Activated naive CD4-positive, alpha-beta T cell treated with anti-CD3 and anti-CD28 coated beads, Interleukin-2, amount 10 ng/mL, durations not matched to agents 7 days and 5 days (primary cell): ENCODE measurements at regions of chr16 and their contacts with region 1.

Region 1: GRCh38 chr16:86517652-86518258 is 7.4 kb downstream of the FOXF1 start:
- DNase-seq: peak; percentile 49
- H3K4me3 Mint-ChIP-seq: no peak overlapping the region
- H3K27ac Mint-ChIP-seq: no peak overlapping the region
- H3K4me1 Mint-ChIP-seq: peaks cover 2% of the 10 kb centered on the region
- H3K27me3 Mint-ChIP-seq: peaks cover 85% of the 10 kb centered on the region

Region 2: DNA sequence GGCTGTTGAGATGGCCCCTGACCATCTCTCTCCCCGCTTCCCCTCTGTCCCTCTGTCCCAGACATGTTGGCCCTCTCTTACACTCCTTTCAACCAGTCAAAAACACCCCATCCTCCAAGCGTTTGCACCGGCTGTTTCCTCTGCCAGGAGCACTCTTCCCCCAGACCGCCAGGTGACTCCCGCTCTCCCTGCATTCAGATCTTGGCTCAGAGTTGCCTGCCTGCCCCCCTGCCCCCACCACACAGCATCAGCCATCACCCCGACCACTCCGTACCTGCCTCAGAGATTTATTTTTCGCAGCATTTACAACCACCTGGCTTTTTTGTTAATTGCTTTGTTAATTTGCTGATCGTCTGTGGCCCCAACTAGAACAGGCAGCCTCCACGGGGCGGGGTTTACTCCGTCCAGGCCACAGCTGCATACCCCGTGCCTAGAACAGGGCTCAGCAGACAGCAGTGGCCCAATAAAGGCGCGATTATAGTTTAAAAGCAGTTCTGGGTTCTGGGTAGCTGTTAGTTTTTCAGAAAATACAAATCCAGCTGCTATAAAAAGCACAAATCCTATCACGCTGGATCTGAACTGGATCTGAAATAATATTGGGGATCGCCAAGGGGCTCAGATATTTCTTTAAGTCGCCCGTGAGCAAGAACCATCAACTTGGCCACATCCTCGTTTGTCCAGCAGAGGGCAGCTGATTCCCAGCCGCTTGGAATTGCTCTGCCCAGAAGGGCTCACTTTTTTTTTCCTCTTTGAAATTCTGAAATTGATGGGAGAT is 445.2 kb before region 1 on chr16:
- CTCF ChIA-PET with region 1: interaction called, 12 read pairs
- DNase-seq: peak; percentile 57
- H3K4me3 Mint-ChIP-seq: no peak overlapping the region
- H3K27ac Mint-ChIP-seq: no peak overlapping the region
- H3K4me1 Mint-ChIP-seq: no peaks in the 10 kb centered on the region
- H3K27me3 Mint-ChIP-seq: peaks cover 26% of the 10 kb centered on the region

Region 3: DNA sequence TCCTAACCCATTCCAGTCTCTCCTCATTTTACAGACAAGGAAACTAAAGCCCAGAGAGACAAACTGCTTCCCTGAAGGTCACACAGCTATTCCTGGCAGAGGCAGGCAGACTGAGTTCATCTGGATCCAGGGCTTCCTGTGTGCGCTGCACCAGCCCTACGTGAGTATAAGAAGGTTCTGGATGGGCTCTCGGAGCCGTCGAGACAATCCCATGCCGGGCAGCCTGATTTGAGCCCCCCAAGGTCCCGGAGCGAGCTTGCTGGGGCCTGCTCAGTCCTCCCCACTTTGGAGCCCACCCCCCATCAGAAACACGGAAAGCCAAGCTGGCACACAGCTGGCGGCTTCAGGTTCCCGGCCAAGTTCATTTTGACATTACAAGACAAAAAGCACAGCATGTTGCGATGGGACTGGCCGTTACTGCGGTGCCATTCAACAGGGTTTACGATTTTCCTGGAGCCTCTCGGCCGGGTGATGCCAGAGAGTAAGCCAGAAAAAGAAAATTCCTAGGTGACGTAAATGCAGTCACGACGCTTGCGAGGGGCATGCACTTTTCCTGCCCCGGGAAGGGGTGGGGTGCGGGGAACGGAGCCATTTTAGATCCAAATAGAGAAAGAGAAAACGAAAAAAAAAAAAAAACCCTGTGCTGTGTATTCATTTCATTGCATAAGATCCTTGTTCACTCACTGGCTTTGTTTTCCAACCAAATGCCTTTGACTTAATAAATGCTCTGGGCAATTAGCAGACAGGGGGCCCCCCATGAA is 174.5 kb before region 1 on chr16:
- CTCF ChIA-PET with region 1: interaction called, 15 read pairs
- DNase-seq: no peak
- H3K4me3 Mint-ChIP-seq: no peak overlapping the region
- H3K27ac Mint-ChIP-seq: no peak overlapping the region
- H3K4me1 Mint-ChIP-seq: no peaks in the 10 kb centered on the region
- H3K27me3 Mint-ChIP-seq: peaks cover 47% of the 10 kb centered on the region

Region 4: DNA sequence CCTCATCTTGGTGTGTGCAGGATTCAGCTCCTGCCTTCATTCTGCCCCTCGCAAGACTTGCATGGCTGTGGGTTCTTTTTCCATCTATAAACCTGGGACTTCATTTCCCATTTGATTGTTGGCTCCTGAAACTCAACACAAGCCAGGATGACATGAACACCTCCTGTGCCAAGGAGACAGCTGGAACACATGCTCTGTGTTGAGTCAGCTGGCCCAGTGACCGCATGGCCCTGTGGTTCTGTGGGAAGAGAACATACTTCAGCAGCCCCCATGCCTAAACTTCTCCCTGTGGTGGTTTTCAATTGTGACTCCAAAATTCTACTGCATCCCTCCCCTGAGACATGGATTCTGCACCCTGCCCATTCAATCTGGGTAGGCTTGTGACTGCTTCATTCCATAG is 65.3 kb before region 1 on chr16:
- CTCF ChIA-PET with region 1: no interaction called
- DNase-seq: no peak
- H3K4me3 Mint-ChIP-seq: no peak overlapping the region
- H3K27ac Mint-ChIP-seq: no peak overlapping the region
- H3K4me1 Mint-ChIP-seq: peaks cover 2% of the 10 kb centered on the region
- H3K27me3 Mint-ChIP-seq: peaks cover 15% of the 10 kb centered on the region